GM12878 (cell line): ENCODE measurements at regions of chr7 and their contacts with region 1.

Region 1: DNA sequence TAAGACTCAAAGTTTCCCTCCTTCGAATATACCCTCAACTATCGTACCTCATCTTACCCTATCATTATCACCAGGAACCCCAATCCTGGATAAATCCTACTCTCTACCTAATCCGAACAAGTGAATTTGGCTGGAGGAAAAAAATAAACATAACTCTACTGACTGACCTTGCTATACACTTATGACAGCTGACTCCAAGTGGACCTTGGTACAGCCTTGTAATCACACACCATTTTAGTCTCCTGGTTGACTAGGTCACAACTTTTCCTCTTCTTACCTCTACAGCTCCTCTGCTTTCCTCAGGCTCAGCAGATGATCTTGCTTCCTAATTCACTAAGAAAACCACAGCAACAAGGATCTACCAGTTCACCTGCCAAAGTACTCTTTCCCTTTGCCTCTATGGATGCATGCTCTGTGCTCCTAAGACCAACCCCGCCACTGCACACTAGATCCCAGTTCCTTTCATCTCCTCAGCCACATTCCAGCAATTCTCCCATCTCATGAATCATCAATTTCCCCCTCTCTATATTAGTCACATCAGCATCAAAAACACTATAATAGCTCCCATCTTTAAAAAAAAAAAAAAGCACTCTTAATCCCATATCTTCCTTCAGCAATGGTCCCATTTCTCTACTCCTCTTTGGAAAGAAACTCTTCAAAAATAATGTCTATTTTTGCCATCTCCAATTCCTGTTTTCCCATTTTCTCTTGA is 35.5 kb downstream of the COA1 start:
- DNase-seq: no peak
- ATAC-seq: no peak
- H3K4me3 ChIP-seq: no peak overlapping the region
- H3K27ac ChIP-seq: no peak overlapping the region
- H3K4me1 ChIP-seq: peaks cover 12% of the 10 kb centered on the region; the same call in 1 of the 2 replicates
- H3K27me3 ChIP-seq: no peaks in the 10 kb centered on the region
- CTCF ChIP-seq: no peak
- EP300 ChIP-seq: no peak
- POLR2A ChIP-seq: no peak
- RAD21 ChIP-seq: no peak

Region 2: DNA sequence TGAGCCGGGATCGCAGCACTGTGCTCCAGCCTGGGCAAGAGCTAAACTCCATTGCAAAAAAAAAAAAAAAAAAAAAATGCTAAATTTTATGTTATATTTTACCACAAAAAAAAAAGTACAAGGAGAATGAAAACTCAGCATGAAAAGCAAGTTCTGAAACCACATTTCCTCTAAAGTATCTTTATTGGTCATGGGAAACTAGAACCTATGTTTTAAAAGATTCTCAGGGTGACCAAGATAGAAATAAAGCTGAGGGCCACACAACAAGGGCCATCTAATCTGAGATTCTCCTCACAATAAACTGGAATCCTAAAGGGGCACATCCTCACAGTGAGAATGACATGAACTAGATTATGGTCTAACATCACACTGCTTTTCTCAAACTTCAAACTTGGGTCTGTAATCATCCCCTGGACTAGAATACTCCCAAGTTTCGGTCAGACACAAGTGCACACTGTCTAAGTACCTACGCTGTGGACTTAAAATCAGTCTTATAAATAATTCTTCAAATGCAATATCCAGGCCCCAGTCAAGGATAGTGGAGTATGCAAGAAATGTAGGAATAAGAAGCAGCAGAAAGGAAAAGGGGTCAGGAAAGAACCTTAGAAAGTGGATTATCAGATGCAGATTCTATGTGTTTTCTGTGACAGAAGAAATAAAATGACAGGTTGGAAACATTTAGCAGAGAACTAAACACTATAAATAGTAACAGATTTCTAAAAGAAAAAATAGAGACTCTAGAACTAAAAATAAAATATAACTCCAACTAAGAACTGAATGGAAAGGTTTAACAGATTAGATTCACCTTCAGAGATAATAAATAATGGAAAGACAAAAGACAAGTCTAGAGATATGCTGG is 14.4 kb before region 1 on chr7:
- CTCF ChIA-PET with region 1: interaction called, 71 read pairs
- POLR2A ChIA-PET with region 1: interaction called, 15 read pairs
- RAD21 ChIA-PET with region 1: interaction called, 3 read pairs
- SMC1A ChIA-PET with region 1: interaction called, 7 read pairs
- in situ Hi-C with region 1: no loop called
- intact Hi-C with region 1: no loop called
- DNase-seq: peak; percentile 48
- ATAC-seq: peak; percentile 71
- H3K4me3 ChIP-seq: no peak overlapping the region
- H3K27ac ChIP-seq: peak overlapping the region; percentile 80
- H3K4me1 ChIP-seq: peaks cover 11% of the 10 kb centered on the region
- H3K27me3 ChIP-seq: no peaks in the 10 kb centered on the region
- CTCF ChIP-seq: no peak
- EP300 ChIP-seq: no peak
- POLR2A ChIP-seq: no peak
- RAD21 ChIP-seq: no peak